HepG2 (cell line): ENCODE measurements at regions of chr5 and their contacts with region 1.

Region 1: GRCh38 chr5:56481428-56482357 is 248.6 kb upstream of the ANKRD55 start:
- DNase-seq: peak; percentile 35
- ATAC-seq: peak; percentile 42
- H3K4me3 ChIP-seq: peak overlapping the region; percentile 53 to 73 (median 61)
- H3K27ac ChIP-seq: peak overlapping the region; percentile 96
- H3K4me1 ChIP-seq: peaks cover 63% of the 10 kb centered on the region
- H3K27me3 ChIP-seq: no peaks in the 10 kb centered on the region
- CTCF ChIP-seq: peak; percentile 58
- EP300 ChIP-seq: 0 out of 4 replicates have a peak, but pooled peaks of 1 of the 2 experiments have one; percentile 9
- POLR2A ChIP-seq: no peak
- RAD21 ChIP-seq: no peak

Region 2: DNA sequence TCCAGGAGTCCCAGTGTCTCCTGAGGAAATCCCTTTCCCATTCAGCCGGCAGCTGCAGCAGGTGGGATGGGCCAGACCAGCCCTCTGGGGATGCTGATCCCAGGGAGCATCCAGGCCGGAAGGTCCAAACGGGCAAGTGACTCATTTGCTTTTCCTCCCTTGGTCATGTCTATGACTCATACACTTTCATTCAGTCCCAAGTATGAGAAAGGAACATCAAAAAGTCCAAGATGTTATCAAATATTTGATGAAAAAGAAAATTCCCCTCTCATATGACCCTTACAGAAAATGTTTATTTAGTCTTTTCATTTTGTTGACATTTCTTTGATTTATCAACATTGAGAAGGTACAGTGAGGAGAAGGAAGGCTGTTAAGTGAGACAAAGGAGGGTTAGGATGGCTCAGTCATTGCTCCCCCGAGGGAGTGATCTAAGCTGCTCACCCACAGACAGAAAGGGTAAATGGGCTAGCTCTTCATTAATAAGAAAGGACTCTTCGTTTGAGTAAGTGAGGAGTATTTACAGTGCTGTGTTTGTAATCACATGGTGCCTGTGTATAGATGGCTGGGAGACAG is 131.0 kb before region 1 on chr5:
- CTCF ChIA-PET with region 1: no interaction called
- POLR2A ChIA-PET with region 1: interaction called, 10 read pairs
- in situ Hi-C with region 1: loop called (anchors 10 kb)
- intact Hi-C with region 1: no loop called
- DNase-seq: peak; percentile 92
- ATAC-seq: peak; percentile 95
- H3K4me3 ChIP-seq: no peak overlapping the region
- H3K27ac ChIP-seq: peak overlapping the region; percentile 44
- H3K4me1 ChIP-seq: peaks cover 72% of the 10 kb centered on the region
- H3K27me3 ChIP-seq: no peaks in the 10 kb centered on the region
- CTCF ChIP-seq: no peak
- EP300 ChIP-seq: peak in 1 of 2 experiments; percentile 90; a peak in 2 of 4 replicates
- POLR2A ChIP-seq: no peak
- RAD21 ChIP-seq: no peak

Region 3: DNA sequence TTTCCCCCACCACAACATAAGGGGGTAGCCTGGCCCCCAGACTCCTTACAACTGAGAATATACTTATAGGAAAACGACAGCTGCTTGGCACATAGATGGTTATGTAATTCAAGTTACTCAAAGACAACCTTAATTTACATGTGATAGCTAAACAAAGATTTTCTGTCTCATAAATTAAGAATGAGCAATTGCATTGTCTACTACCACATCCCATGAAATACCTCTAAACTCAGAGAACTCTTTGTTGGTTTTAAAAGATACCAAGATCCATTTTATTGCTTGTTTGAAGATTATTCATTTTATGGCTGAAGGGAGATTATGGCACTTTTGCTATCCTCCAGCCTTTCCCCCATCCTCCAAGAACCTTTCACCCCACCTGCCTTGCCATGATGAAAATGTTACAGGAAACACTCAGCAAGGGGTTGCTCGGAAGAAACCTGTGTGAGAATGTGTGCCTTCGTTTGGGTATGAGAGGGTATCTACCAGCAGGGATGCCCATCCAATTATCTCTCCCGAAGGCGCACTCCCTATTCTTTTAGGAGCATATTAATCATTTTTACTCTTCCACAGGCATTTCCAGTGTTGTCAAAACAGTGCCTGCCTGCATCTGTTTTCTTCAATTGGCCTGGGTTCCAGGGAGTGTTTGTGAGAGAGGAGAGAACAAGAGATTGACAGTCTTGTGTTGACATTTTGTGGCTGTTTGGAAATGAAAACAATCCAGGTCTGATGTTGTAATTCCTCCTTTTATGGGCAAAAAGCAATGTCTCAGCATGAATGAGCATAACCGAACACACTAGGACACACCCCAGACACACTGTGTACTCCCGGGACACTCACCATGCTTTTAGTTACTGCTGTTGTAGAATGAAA is 40.6 kb before region 1 on chr5:
- CTCF ChIA-PET with region 1: no interaction called
- POLR2A ChIA-PET with region 1: interaction called, 4 read pairs
- in situ Hi-C with region 1: no loop called
- intact Hi-C with region 1: loop called (anchors 2 kb)
- DNase-seq: peak; percentile 96
- ATAC-seq: peak; percentile 99
- H3K4me3 ChIP-seq: no peak overlapping the region
- H3K27ac ChIP-seq: peak overlapping the region; percentile 65
- H3K4me1 ChIP-seq: peaks cover 45% of the 10 kb centered on the region
- H3K27me3 ChIP-seq: no peaks in the 10 kb centered on the region
- CTCF ChIP-seq: no peak
- EP300 ChIP-seq: peak in 1 of 2 experiments; percentile 82; a peak in 2 of 4 replicates
- POLR2A ChIP-seq: no peak
- RAD21 ChIP-seq: no peak

Region 4: DNA sequence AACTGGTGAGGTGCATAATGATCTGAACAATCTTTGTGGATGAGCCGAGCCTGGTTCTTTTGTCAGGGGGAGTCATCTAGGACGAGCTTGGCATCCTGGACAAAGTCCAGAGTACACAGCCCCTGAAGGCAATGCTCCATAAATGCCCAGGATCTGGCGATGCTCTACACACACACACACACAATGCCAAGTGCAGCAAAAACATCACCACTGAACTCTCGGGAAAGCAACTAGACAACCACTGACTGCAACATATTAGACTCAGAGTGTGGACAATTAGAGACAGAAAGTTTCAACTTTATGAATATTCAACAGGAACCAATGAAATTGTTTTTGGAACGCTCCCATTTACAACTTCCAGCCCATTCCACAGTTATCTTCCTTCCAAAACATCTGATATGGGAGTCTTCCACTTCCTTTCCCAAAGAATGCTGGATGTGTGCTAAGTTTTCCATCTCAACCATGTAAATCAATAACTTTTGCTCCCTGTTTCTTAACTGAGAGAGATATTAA is 21.0 kb before region 1 on chr5:
- CTCF ChIA-PET with region 1: no interaction called
- POLR2A ChIA-PET with region 1: interaction called, 17 read pairs
- in situ Hi-C with region 1: no loop called
- intact Hi-C with region 1: no loop called
- DNase-seq: peak; percentile 58
- ATAC-seq: peak; percentile 51; the same call in 2 of the 3 replicates
- H3K4me3 ChIP-seq: no peak overlapping the region
- H3K27ac ChIP-seq: peak overlapping the region; percentile 32
- H3K4me1 ChIP-seq: peaks cover 49% of the 10 kb centered on the region
- H3K27me3 ChIP-seq: no peaks in the 10 kb centered on the region
- CTCF ChIP-seq: no peak
- EP300 ChIP-seq: no peak
- POLR2A ChIP-seq: no peak
- RAD21 ChIP-seq: no peak

Region 5: GRCh38 chr5:56595374-56595965 is 113.8 kb after region 1 on chr5:
- CTCF ChIA-PET with region 1: no interaction called
- POLR2A ChIA-PET with region 1: no interaction called
- in situ Hi-C with region 1: no loop called
- intact Hi-C with region 1: no loop called
- DNase-seq: no peak
- ATAC-seq: peak; percentile 38; the same call in 1 of the 3 replicates
- H3K4me3 ChIP-seq: no peak overlapping the region
- H3K27ac ChIP-seq: no peak overlapping the region
- H3K4me1 ChIP-seq: no peaks in the 10 kb centered on the region
- H3K27me3 ChIP-seq: peaks cover 0 to 3% of the 10 kb centered on the region in 2 experiments; a peak in 1 of 5 replicates
- CTCF ChIP-seq: peak; percentile 13; the same call in 1 of the 2 replicates
- EP300 ChIP-seq: no peak
- POLR2A ChIP-seq: no peak
- RAD21 ChIP-seq: no peak

Region 6: DNA sequence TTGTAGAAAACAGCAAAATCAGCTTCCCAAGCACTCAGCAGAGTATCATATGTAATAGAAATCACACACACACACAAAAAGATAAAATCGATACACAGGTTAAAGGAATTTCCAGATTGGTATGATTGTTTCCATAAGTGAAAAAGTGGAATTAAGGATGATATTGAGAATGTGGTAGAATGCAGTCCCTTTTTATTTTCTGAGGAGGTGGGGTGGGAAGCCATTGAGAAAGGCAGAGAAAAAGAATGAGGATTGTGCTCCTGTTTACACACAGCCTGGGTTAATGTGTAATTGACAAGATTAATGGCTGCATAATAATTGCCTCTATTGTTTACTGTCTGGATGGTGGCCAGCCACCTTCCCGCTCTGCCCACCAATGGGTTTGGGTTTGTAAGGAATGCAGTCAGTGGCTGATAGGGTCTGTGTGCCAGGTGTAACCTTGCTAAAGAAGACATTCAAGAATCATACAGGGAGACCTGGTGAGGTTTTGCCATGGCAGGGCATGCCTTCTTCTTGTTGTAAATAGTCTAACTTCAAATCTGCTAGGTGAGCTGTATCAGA is 156.4 kb after region 1 on chr5:
- CTCF ChIA-PET with region 1: no interaction called
- POLR2A ChIA-PET with region 1: interaction called, 7 read pairs
- in situ Hi-C with region 1: no loop called
- intact Hi-C with region 1: loop called (anchors 2 kb)
- DNase-seq: peak; percentile 94
- ATAC-seq: peak; percentile 92
- H3K4me3 ChIP-seq: peak overlapping the region in 2 of 3 experiments; percentile 24 to 41; a peak in 2 of 6 replicates
- H3K27ac ChIP-seq: peak overlapping the region; percentile 89
- H3K4me1 ChIP-seq: peaks cover 72% of the 10 kb centered on the region
- H3K27me3 ChIP-seq: no peaks in the 10 kb centered on the region
- CTCF ChIP-seq: no peak
- EP300 ChIP-seq: peak in 1 of 2 experiments; percentile 71; a peak in 2 of 4 replicates
- POLR2A ChIP-seq: no peak
- RAD21 ChIP-seq: no peak

Region 7: DNA sequence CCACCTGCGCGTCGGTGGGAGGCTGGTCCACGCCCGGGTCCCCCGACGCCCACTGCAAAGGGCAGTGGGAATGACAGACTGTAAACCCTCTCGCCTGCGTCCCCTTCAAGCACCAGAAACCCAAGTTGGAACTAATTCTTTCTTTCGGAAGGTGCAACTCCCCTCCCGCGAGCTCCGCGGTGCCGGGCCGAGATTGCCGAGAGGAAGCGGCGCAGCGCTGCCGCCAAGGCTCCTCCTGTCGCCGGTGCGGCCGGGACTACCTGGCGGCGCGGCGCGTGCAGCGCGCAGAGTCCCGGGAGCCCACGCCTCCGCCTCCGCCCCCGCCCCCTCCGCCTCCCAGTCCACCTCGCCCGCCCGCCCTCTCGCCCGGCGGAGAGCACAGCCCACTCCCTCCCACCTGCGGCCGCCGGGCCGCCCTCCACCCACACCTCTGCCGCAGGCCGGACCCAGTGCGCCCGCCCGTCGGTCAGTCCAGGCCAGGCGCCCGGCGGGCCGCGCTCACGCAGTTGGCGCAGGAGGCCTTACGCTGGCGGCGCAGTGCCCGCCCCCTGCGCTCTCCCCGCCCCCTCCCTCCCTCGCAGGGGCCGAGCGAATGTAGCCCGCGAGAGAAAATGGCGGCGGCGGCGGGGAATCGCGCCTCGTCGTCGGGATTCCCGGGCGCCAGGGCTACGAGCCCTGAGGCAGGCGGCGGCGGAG is 333.4 kb after region 1 on chr5 and contains the start of gene MAP3K1:
- CTCF ChIA-PET with region 1: no interaction called
- POLR2A ChIA-PET with region 1: interaction called, 6 read pairs
- in situ Hi-C with region 1: no loop called
- intact Hi-C with region 1: loop called (anchors 2 kb)
- DNase-seq: peak; percentile 82
- ATAC-seq: peak; percentile 84
- H3K4me3 ChIP-seq: peak within 1 kb of the TSS; percentile 88 to 95 (median 89)
- H3K27ac ChIP-seq: peak within 1 kb of the TSS; percentile 93
- H3K4me1 ChIP-seq: peaks cover 43% of the 10 kb centered on the region
- H3K27me3 ChIP-seq: no peaks in the 10 kb centered on the region; a peak in 1 of 5 replicates
- CTCF ChIP-seq: peak; percentile 9; the same call in 1 of the 2 replicates
- EP300 ChIP-seq: no peak
- POLR2A ChIP-seq: peak; percentile 62 to 73; a peak in 3 of 4 replicates
- RAD21 ChIP-seq: peak; percentile 27
- total RNA-seq, gene MAP3K1: 30.3 and 44.1 TPM in 2 replicates